Activated CD4-positive, alpha-beta memory T cell treated with anti-CD3 and anti-CD28 coated beads, Interleukin-2, amount 10 ng/mL, durations not matched to agents 7 days and 5 days (primary cell): ENCODE measurements at regions of chr6 and their contacts with region 1.

Region 1: DNA sequence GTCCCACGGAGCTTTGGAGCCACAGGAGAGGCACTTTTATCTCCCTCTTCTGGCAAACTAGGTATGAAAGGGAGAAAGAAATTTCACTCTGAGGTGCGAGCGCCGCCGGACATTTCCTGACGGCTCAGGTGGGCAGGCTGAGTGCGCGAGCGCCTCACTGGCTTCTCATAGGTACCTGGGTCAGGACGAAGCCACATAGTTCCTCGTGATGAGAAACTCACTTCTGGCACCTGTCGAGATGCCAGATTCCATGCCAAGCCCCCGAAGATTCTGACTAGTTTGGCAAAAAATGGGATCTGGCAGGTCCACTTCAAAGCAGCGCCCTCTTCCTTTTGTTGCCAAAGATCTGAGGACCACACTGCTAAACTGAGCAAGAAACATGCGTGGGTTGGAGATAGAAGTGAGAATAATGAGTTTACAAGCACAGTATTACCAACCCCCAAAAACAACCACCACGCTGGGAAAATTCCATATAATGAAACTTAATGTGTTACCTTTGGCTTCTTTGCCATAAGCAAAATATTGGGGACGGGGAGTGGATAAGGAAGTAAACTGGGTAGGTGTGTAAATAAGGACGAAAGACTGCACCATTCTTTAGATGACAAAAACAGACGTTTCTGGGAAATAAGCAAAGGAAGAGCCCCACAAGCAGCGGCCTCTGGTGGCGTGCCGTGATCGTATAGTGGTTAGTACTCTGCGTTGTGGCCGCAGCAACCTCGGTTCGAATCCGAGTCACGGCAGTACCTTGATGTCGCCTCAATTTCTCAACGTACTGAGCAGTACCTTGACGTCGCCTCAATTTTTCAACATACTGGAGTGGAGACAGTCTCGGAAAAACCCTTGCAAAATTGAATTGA is 89.8 kb upstream of the PRSS16 start:
- DNase-seq: peak; percentile 84
- H3K4me3 Mint-ChIP-seq: peak overlapping the region; percentile 69
- H3K27ac Mint-ChIP-seq: peak overlapping the region; percentile 69
- H3K4me1 Mint-ChIP-seq: peaks cover 52% of the 10 kb centered on the region
- H3K27me3 Mint-ChIP-seq: no peaks in the 10 kb centered on the region

Region 2: DNA sequence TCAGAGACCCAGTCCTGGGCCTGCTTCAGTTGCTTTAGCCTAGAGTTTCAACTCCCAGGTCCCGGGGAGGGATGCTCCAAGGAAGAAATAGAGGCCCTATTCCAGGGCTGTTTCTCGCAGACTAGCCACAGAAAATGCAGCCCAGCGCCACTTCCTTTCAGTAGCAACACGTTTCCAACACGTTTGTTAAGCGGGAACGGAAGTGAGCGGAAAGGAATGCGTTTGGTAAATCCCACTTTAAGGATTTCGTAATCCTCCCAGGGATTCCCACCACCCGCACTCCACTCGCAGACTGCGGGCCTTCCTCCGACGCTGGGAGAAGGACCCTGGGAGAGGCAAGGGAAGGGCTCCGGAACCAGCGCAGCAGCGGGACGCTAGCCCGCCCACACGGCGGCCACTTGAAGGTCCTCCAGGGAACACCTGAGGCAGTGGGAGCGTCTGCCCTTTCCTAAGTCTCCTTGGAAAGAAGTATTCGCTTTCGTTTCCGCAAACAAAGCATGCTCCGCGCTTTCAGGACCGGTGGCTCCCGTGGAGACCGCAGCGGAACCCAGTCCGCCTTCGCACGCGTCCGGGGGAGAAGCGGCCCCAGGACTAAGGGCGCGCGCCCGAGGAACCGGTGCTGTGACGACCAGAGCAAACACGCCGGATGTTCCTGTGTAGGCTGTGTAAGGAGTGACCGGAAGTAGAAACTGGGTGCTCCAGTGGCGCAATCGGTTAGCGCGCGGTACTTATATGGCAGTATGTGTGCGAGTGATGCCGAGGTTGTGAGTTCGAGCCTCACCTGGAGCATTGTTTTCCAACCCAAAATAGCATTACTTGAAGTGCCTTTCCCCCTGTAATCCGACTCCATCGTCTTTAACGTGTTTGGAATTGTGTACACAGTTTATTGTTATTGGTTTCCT is 137.8 kb before region 1 on chr6:
- CTCF ChIA-PET with region 1: no interaction called
- POLR2A ChIA-PET with region 1: no interaction called
- DNase-seq: peak; percentile 46
- H3K4me3 Mint-ChIP-seq: peak overlapping the region; percentile 59
- H3K27ac Mint-ChIP-seq: no peak overlapping the region
- H3K4me1 Mint-ChIP-seq: peaks cover 9% of the 10 kb centered on the region
- H3K27me3 Mint-ChIP-seq: peaks cover 26% of the 10 kb centered on the region

Region 3: DNA sequence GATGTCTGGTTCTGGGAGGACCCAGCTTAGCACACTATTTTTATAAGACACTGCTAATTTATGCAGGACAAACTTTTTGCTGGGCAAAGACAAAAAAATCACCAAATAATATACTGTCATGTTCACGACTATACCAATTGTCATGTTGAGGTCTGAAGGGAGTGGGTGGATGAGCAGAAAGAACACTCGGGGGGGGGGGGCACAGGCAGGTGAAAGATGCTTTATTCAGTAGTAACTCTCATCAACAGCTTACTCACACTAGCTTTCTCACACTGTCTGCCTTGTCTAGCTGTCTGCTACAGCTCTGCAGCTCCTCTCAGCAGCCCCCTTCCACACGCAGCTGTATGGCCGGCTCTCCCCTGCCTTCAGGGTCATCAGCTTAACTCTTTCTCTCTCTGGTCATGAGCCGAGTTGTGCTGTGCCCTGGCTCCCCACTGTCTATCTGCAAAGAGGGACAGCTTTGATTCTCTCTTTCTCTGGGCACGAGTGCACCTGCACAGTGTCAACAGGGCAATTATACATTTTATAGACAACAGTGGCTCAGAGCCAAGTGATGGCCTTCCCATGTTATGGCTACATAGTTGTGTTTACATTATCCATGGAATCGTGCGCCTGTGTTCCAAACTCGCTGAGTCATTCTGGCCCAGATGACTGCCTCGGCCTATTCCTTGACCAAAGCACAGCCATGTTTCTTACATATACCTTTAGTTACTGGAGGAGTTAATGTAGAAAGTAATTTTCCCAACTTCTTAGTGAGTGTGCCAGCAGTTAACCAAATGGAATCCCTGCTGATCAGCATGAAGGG is 97.9 kb before region 1 on chr6:
- CTCF ChIA-PET with region 1: no interaction called
- POLR2A ChIA-PET with region 1: no interaction called
- DNase-seq: no peak
- H3K4me3 Mint-ChIP-seq: no peak overlapping the region
- H3K27ac Mint-ChIP-seq: no peak overlapping the region
- H3K4me1 Mint-ChIP-seq: no peaks in the 10 kb centered on the region
- H3K27me3 Mint-ChIP-seq: peaks cover 10% of the 10 kb centered on the region

Region 4: GRCh38 chr6:27096834-27097511 is 60.7 kb before region 1 on chr6:
- CTCF ChIA-PET with region 1: no interaction called
- POLR2A ChIA-PET with region 1: no interaction called
- DNase-seq: peak; percentile 41
- H3K4me3 Mint-ChIP-seq: peak overlapping the region; percentile 74
- H3K27ac Mint-ChIP-seq: no peak overlapping the region
- H3K4me1 Mint-ChIP-seq: peaks cover 18% of the 10 kb centered on the region
- H3K27me3 Mint-ChIP-seq: peaks cover 49% of the 10 kb centered on the region

Region 5: GRCh38 chr6:27126815-27127537 is 30.7 kb before region 1 on chr6:
- CTCF ChIA-PET with region 1: interaction called, 20 read pairs
- POLR2A ChIA-PET with region 1: interaction called, 971 read pairs
- DNase-seq: peak; percentile 87
- H3K4me3 Mint-ChIP-seq: peak overlapping the region; percentile 67
- H3K27ac Mint-ChIP-seq: peak overlapping the region; percentile 84
- H3K4me1 Mint-ChIP-seq: peaks cover 51% of the 10 kb centered on the region
- H3K27me3 Mint-ChIP-seq: no peaks in the 10 kb centered on the region

Region 6: GRCh38 chr6:27177485-27178406 is 20.1 kb after region 1 on chr6:
- CTCF ChIA-PET with region 1: interaction called, 22 read pairs
- POLR2A ChIA-PET with region 1: interaction called, 4 read pairs
- DNase-seq: peak; percentile 80
- H3K4me3 Mint-ChIP-seq: peak overlapping the region; percentile 92
- H3K27ac Mint-ChIP-seq: peak overlapping the region; percentile 88
- H3K4me1 Mint-ChIP-seq: peaks cover 20% of the 10 kb centered on the region
- H3K27me3 Mint-ChIP-seq: peaks cover 21% of the 10 kb centered on the region